ENCODE measurements at regions of chr10 and their contacts with region 1.

Region 1: DNA sequence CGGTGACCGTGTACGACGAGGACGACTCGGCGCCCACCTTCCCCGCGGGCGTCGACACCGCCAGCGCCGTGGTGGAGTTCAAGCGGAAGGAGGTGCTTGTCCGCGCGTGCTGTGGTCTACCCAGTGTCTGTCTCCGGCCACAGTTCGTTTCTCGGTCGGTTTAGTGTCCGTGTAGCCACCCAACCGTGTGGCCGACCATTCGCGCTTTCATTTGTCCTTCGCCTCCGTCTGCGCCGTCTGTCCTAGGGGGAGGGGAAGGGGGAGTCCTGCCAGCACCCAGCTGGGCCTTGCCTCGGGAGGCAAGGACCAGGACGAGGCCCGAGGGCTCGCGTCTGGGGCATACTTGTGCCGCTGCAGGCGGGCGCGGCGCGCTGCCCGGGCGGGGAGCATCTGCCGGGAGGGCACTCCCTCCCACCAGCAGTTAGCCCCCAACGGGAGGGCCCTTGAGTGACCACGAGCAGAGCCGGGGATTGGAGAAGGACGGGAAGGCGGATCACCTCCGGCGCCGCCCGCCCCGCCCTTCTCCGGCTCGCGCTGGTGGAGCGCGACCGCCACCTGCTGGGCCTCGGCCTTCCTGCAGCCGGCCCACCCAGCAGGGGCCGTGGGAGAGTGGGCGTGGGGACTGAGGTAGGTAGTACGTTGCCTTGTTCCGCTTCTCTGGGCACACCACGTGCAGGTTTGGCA is 28.4 kb downstream of the RET start:
- DNase-seq: peak; percentile 90

Region 2: GRCh38 chr10:42753126-42753506 is 352.1 kb before region 1 on chr10:
- intact Hi-C with region 1: loop called in 1 of 2 experiments (anchors 5 kb)
- DNase-seq: peak; percentile 91

Region 3: GRCh38 chr10:42866115-42866995 is 238.9 kb before region 1 on chr10:
- intact Hi-C with region 1: loop called (anchors 5 kb)
- DNase-seq: peak; percentile 95

Measured in posterior vena cava (tissue), 2 donors.